OCI-LY7 (cell line): ENCODE measurements at regions of chr2 and their contacts with region 1.

Region 1: GRCh38 chr2:25453199-25453905 is 111.6 kb upstream of the DNMT3A start:
- DNase-seq: no peak
- H3K4me3 ChIP-seq: no peak overlapping the region
- H3K27ac ChIP-seq: no peak overlapping the region
- H3K4me1 ChIP-seq: no peaks in the 10 kb centered on the region
- CTCF ChIP-seq: no peak

Region 2: DNA sequence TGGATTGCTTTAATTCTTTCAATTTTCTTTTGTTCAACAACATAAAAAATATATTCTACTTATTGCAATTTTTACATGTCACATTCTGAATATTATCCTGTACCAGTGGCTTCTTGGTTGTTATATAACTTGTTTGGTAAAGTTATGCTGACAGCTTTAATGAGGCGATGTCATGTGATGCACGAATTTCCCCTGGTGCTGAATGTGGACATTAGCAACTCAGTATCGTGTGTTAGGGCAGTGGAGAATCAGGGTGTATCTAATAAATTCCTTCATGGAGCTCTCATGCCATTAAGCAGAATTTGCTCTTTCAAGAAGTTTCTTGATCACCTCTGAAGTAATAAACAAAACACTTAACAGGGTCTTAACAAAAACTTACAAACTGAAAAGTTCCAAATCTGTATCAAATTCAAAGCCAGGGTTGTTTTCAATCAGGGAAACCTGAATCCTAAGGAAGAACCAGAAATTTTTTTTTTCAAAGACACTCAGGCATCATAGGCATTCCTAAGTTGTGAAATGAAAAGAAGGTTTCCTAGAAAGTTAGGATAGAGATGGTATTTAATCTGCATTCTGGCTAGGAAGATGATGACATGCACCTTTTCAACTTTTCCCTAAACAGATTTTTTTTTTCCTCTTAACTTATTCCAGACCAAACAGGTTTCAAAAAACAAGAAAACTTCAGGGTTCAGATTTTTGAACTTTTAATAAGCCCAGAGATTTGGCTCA is 11.8 kb before region 1 on chr2:
- CTCF ChIA-PET with region 1: no interaction called
- POLR2A ChIA-PET with region 1: interaction called, 10 read pairs
- intact Hi-C with region 1: no loop called
- DNase-seq: no peak
- H3K4me3 ChIP-seq: no peak overlapping the region
- H3K27ac ChIP-seq: no peak overlapping the region
- H3K4me1 ChIP-seq: no peaks in the 10 kb centered on the region
- CTCF ChIP-seq: no peak

Region 3: GRCh38 chr2:25521665-25522387 is 68.5 kb after region 1 on chr2:
- CTCF ChIA-PET with region 1: no interaction called
- POLR2A ChIA-PET with region 1: no interaction called
- intact Hi-C with region 1: no loop called
- DNase-seq: peak; percentile 89
- H3K4me3 ChIP-seq: peak overlapping the region; percentile 42
- H3K27ac ChIP-seq: peak overlapping the region; percentile 56
- H3K4me1 ChIP-seq: peaks cover 38% of the 10 kb centered on the region
- CTCF ChIP-seq: peak; percentile 99